Motor neuron (in vitro differentiated cells): ENCODE measurements at regions of chr11 and their contacts with region 1.

Region 1: GRCh38 chr11:111870886-111871692 is at the start of gene ALG9:
- ATAC-seq: peak; percentile 89 to 97 (median 96)
- H3K4me3 ChIP-seq: peak within 1 kb of the TSS; percentile 64 to 99 (median 94)
- H3K27ac ChIP-seq: peak within 1 kb of the TSS; percentile 72 to 76
- H3K4me1 ChIP-seq: peaks cover 0 to 15% of the 10 kb centered on the region in 2 donors
- total RNA-seq, gene ALG9: 46.9 to 57.0 (median 53.9) TPM

Region 2: GRCh38 chr11:111246956-111247355 is 624.1 kb before region 1 on chr11:
- in situ Hi-C with region 1: no loop called
- ATAC-seq: no peak
- H3K4me3 ChIP-seq: no peak overlapping the region
- H3K27ac ChIP-seq: no peak overlapping the region
- H3K4me1 ChIP-seq: no peaks in the 10 kb centered on the region

Region 3: DNA sequence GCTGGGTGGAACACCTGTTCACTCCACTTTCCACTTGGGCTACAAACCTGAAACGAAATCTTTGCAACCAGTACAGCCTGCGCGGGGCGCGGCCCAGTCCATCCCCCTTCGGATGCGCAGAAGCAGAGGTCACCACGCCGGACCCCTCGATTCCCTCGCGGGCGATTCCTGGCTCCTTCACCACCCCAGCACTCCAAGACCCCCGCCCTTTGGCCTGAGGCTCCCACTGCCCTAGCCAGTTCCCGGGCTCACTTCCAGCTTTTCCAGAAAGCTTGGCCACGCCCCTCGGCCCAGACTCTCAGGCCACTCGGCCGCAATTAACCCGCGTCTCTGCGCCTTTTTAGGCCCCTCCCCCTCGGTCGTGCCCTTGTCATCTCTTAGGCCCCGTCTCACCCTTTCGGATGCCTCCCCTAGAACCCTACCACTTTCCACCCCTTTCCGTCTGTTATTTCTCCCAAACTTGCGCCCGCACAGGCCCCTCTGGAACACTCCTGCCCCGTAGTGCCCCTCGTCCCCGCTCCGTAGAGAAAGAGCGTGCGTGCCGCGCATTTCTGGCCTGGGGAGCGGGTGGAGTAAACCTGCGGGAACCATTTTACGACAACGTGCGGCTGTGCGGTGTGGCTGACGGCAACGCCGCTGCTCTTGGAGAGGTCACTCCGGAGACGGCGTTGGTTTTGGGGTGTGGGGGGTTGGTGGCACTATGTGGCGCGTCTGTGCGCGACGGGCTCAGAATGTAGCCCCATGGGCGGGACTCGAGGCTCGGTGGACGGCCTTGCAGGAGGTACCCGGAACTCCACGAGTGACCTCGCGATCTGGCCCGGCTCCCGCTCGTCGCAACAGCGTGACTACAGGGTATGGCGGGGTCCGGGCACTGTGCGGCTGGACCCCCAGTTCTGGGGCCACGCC is 153.9 kb after region 1 on chr11 and contains the start of gene DLAT:
- in situ Hi-C with region 1: loop called in 1 of 9 experiments (anchors 25 kb)
- ATAC-seq: peak; percentile 82 to 91 (median 90)
- H3K4me3 ChIP-seq: peak within 1 kb of the TSS; percentile 63 to 91 (median 77)
- H3K27ac ChIP-seq: peak within 1 kb of the TSS; percentile 92 to 95
- H3K4me1 ChIP-seq: peaks cover 4 to 8% of the 10 kb centered on the region in 2 donors
- total RNA-seq, gene DLAT: 23.4 to 70.2 (median 36.8) TPM

Region 4: DNA sequence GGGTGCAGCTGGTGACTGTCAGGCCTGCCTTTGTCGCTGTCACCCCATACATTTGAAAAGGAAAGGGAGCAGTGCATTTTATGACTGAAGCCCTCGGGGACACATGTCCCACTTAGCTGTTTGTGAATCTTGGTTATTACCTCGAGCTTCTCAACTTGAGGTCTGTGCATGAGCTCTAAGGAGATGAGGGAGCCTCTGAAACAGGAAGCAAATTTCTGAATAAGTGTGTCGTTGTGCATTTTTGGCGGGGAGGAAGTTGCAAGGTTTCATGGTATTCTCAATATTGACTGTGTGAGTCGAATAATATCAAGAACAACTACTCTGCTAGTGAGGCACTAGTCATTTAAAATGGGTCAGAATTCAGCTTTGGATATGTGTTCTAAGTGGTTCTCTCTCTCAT is 539.2 kb after region 1 on chr11:
- in situ Hi-C with region 1: no loop called
- ATAC-seq: no peak
- H3K4me3 ChIP-seq: no peak overlapping the region
- H3K27ac ChIP-seq: no peak overlapping the region
- H3K4me1 ChIP-seq: peaks cover 11 to 20% of the 10 kb centered on the region in 2 donors